SK-N-SH (cell line): ENCODE measurements at regions of chr3 and their contacts with region 1.

Region 1: GRCh38 chr3:182490596-182491491 is 302.5 kb upstream of the ATP11B start:
- DNase-seq: peak; percentile 39
- H3K4me3 ChIP-seq: no peak overlapping the region; a peak in 1 of 4 replicates
- H3K27ac ChIP-seq: no peak overlapping the region
- H3K4me1 ChIP-seq: peaks cover 0 to 8% of the 10 kb centered on the region in 2 experiments; a peak in 1 of 4 replicates
- H3K27me3 ChIP-seq: no peaks in the 10 kb centered on the region
- CTCF ChIP-seq: peak; percentile 61
- EP300 ChIP-seq: no peak
- RAD21 ChIP-seq: peak; percentile 63

Region 2: DNA sequence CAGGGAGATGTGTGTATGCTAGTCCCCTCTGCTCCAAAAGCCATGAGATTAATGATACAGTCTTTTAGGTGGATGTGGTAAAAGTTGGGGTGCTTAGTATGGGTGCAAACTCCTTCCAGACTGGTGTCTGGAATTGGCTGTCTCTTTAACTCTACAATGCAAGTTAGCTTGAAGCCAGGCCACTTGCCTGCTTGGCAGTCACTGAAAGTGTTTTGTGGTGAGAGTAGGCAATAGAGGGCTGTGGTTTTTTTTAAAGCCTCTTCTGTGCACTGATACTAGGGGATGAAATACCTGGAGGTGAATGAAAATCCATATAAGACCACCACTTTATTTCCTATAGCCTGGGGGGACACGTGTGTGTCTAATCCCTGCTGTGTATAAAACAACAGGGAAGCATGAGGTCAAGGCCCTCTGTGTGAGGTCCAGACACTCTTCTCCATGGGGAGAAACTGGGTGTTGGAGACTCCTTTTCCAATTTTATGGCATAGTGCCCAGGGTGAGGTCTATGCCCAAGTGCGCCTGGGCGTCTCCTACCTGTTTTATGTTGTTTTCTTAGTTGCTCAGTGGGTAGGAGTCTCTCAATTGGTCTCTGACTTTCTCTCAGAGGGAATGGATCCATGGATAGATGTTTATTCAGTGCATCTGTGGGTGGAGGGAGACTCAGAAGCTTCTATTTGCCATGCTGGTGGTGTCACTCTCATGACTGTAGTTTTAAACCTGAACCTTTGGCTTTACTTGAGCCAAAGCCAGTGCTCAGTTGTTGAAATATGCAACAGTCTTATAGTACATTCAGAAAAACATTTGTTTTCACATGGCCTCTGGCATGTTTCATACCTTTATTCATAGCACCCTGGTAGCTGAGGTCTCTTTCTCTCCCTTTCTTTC is 25.3 kb before region 1 on chr3:
- CTCF ChIA-PET with region 1: no interaction called
- POLR2A ChIA-PET with region 1: no interaction called
- DNase-seq: no peak
- H3K4me3 ChIP-seq: no peak overlapping the region
- H3K27ac ChIP-seq: no peak overlapping the region
- H3K4me1 ChIP-seq: no peaks in the 10 kb centered on the region
- H3K27me3 ChIP-seq: no peaks in the 10 kb centered on the region
- CTCF ChIP-seq: no peak
- EP300 ChIP-seq: no peak
- RAD21 ChIP-seq: no peak

Region 3: DNA sequence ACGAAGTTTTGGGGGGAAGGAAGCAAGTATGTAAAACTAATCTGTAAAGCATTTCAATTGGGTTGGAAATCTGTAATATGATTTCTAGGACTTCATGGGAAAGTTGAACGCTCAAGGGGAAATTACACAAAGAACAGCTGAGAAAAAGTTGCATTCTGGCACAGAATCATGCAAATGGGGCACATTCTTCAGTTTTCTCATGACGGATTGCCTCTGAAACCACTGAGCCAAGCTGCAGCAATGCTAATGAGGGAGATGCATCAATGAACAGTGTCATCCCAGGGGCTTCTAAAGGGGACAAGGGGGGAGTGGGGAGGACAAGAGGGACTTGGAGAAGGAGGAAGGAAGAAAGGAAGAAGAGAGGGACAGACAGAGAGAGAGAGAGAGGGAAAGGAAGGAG is 11.0 kb after region 1 on chr3:
- CTCF ChIA-PET with region 1: interaction called, 12 read pairs
- POLR2A ChIA-PET with region 1: no interaction called
- DNase-seq: no peak
- H3K4me3 ChIP-seq: no peak overlapping the region
- H3K27ac ChIP-seq: no peak overlapping the region
- H3K4me1 ChIP-seq: no peaks in the 10 kb centered on the region
- H3K27me3 ChIP-seq: no peaks in the 10 kb centered on the region
- CTCF ChIP-seq: no peak
- EP300 ChIP-seq: no peak
- RAD21 ChIP-seq: no peak